Endothelial cell of umbilical vein (primary cell): ENCODE measurements at regions of chr12 and their contacts with region 1.

Region 1: DNA sequence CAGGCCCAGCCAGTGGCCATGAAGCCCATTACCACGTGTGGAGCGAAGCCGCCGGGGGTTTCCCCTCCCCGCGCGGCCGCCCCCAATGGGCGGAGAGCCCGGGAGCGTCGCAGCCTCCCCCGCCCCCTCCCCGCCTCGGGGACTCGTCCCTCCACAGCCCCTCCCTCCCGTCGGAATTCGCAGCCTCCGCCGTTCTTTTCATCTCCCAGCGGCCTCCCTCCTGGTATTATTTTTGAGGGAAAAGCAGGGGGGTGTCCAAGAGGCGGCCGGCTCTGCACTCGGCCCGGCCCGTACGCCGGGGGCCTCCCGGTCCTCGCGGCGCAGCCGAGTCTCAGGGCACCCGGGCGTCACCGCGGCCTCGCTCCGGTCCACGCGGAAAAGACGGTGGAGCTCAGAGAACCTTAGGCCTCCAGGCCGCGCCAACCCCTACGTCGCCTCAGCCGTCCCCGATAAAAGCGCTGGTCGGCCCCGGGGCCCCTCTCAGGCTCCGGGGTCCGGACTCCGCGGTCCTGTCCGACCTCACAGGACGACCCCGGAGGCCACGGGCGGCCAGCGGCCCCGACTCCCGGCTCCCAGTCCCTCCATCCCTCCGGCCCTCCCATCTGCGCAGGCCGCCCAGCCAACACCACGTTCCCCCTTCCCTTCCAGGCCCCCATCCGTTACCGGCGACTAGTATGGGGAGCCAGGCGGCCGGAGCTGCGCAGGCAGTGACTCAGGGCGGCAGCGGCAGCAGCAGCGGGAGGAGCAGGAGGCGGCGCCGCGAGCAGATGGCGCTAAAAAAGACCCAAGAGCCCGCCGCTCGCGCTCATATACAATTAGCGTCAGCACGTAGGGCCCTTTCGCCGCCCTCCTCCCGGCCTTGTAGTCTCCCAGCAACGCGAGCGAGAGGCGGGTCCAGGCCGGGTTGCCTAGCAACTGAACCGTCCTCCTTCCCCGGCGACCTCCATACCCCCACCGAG is at the start of gene NAP1L1:
- DNase-seq: peak; percentile 97
- H3K4me3 ChIP-seq: peak within 1 kb of the TSS; percentile 76 to 99 (median 93)
- H3K27ac ChIP-seq: peak within 1 kb of the TSS; percentile 92
- H3K4me1 ChIP-seq: peaks cover 38% of the 10 kb centered on the region
- H3K27me3 ChIP-seq: no peaks in the 10 kb centered on the region
- CTCF ChIP-seq: peak in 1 of 2 donors; percentile 7
- POLR2A ChIP-seq: peak; percentile 87
- total RNA-seq, gene NAP1L1: 649 and 665 TPM in 2 replicates

Region 2: DNA sequence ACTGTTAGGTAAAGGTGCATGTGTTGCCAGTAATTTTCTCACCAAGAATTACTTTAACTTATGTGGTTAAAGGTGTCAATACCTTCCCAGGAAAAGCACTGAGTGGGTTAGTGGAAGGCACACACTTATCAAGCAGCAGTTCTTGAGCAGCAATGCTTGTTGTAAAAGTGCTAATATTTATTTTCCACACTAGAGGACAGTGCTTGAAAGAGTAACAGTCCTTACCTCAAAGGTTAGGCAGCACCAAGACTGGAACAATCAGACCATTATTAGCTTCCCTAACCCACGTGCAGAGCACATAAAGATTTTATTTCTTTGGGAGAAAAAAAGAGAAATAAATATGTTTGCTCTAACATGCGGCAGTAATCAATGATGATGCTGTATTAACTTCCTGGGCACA is 524.0 kb before region 1 on chr12:
- CTCF ChIA-PET with region 1: no interaction called
- POLR2A ChIA-PET with region 1: no interaction called
- dilution Hi-C with region 1: no loop called
- intact Hi-C with region 1: loop called (anchors 5 kb)
- DNase-seq: peak; percentile 70
- H3K4me3 ChIP-seq: no peak overlapping the region
- H3K27ac ChIP-seq: no peak overlapping the region
- H3K4me1 ChIP-seq: peaks cover 12% of the 10 kb centered on the region
- H3K27me3 ChIP-seq: no peaks in the 10 kb centered on the region
- CTCF ChIP-seq: peak in 1 of 2 donors; percentile 40
- POLR2A ChIP-seq: no peak

Region 3: GRCh38 chr12:76123451-76124212 is 39.4 kb after region 1 on chr12:
- CTCF ChIA-PET with region 1: interaction called, 3 read pairs
- POLR2A ChIA-PET with region 1: no interaction called
- dilution Hi-C with region 1: no loop called
- intact Hi-C with region 1: loop called (anchors 2 kb)
- DNase-seq: peak; percentile 79
- H3K4me3 ChIP-seq: peak overlapping the region in 1 of 3 experiments; percentile 49
- H3K27ac ChIP-seq: peak overlapping the region; percentile 89
- H3K4me1 ChIP-seq: peaks cover 18% of the 10 kb centered on the region
- H3K27me3 ChIP-seq: no peaks in the 10 kb centered on the region
- CTCF ChIP-seq: no peak
- POLR2A ChIP-seq: no peak

Region 4: DNA sequence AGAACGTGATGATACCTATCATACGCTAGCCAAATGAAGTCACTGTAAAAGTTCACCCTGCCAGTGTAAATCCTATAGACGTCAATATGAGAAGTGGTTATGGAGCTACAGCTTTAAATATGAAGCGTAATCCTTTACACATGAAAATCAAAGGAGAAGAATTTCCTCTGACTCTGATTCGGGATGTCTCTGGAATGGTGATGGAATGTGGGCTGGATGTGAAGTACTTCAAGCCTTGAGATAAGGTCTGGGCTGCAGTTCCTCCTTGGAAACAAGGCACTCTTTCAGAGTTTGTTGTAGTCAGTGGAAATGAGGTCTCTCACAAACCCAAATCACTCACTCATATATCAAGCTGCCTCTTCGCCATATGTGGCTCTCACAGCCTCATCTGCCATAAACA is 53.4 kb after region 1 on chr12:
- CTCF ChIA-PET with region 1: no interaction called
- POLR2A ChIA-PET with region 1: no interaction called
- dilution Hi-C with region 1: no loop called
- intact Hi-C with region 1: no loop called
- DNase-seq: no peak
- H3K4me3 ChIP-seq: no peak overlapping the region
- H3K27ac ChIP-seq: no peak overlapping the region
- H3K4me1 ChIP-seq: no peaks in the 10 kb centered on the region
- H3K27me3 ChIP-seq: no peaks in the 10 kb centered on the region
- CTCF ChIP-seq: no peak
- POLR2A ChIP-seq: no peak

Region 5: GRCh38 chr12:76226397-76226796 is 142.2 kb after region 1 on chr12:
- CTCF ChIA-PET with region 1: interaction called, 3 read pairs
- POLR2A ChIA-PET with region 1: interaction called, 3 read pairs
- dilution Hi-C with region 1: no loop called
- intact Hi-C with region 1: loop called (anchors 5 kb)
- DNase-seq: peak; percentile 90
- H3K4me3 ChIP-seq: no peak overlapping the region
- H3K27ac ChIP-seq: peak overlapping the region; percentile 80
- H3K4me1 ChIP-seq: peaks cover 30% of the 10 kb centered on the region
- H3K27me3 ChIP-seq: no peaks in the 10 kb centered on the region
- CTCF ChIP-seq: no peak
- POLR2A ChIP-seq: peak; percentile 39

Region 6: GRCh38 chr12:76259660-76260389 is 175.6 kb after region 1 on chr12:
- CTCF ChIA-PET with region 1: interaction called, 3 read pairs
- POLR2A ChIA-PET with region 1: interaction called, 9 read pairs
- dilution Hi-C with region 1: no loop called
- intact Hi-C with region 1: loop called (anchors 1 kb)
- DNase-seq: peak; percentile 93
- H3K4me3 ChIP-seq: peak overlapping the region; percentile 19 to 96 (median 95)
- H3K27ac ChIP-seq: peak overlapping the region; percentile 96
- H3K4me1 ChIP-seq: peaks cover 30% of the 10 kb centered on the region
- H3K27me3 ChIP-seq: no peaks in the 10 kb centered on the region
- CTCF ChIP-seq: no peak
- POLR2A ChIP-seq: peak; percentile 89

Region 7: GRCh38 chr12:76559400-76560085 is 475.4 kb after region 1 on chr12 and contains the start of gene OSBPL8:
- CTCF ChIA-PET with region 1: no interaction called
- POLR2A ChIA-PET with region 1: no interaction called
- dilution Hi-C with region 1: no loop called
- intact Hi-C with region 1: loop called (anchors 5 kb)
- DNase-seq: peak; percentile 95
- H3K4me3 ChIP-seq: peak within 1 kb of the TSS; percentile 83 to 95 (median 88)
- H3K27ac ChIP-seq: peak within 1 kb of the TSS; percentile 84
- H3K4me1 ChIP-seq: peaks cover 27% of the 10 kb centered on the region
- H3K27me3 ChIP-seq: no peaks in the 10 kb centered on the region
- CTCF ChIP-seq: no peak
- POLR2A ChIP-seq: peak; percentile 91
- total RNA-seq, gene OSBPL8: 47.6 and 53.9 TPM in 2 replicates